GM10248 (cell line): ENCODE measurements at regions of chr1 and their contacts with region 1.

Region 1: GRCh38 chr1:27671964-27672749 is at the start of gene IFI6:
- DNase-seq: peak; percentile 89
- CTCF ChIP-seq: no peak

Region 2: GRCh38 chr1:27469334-27469733 is 202.8 kb before region 1 on chr1:
- CTCF ChIA-PET with region 1: no interaction called
- POLR2A ChIA-PET with region 1: no interaction called
- DNase-seq: no peak
- CTCF ChIP-seq: no peak

Region 3: DNA sequence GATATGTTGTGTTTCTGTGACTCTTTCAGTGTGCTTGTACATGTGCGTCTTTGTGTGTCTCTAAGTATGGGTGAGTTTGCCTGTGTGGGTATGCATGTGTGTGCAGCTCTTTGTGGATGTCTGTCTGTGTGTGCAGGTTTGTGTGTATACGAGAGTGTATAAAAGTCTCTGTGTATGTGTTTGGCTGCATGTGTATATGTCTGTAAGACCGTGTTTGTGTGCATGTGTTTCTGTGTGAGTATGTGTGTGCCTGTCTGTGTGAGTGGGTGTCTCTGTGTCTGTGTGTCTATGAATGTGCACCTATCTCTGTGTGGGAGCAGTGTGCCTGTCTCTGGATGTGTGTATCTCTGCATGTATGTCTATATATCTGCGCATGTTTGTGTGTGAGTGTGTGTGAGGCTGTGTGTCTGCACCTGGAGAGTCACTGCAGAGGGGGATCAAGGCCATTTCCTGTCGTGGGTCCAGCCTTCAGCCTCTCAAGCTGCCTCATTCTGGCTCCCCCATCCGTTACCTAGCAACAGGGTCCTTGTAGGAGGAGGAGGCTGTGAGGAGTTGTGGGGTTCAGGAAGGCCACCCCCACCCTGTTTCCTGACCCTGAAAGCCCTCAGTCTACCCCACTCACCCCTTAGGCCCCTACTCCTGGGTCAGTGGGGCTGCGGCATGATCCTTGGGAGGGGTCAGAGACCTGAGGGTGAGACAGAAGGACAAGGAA is 47.5 kb before region 1 on chr1:
- CTCF ChIA-PET with region 1: interaction called, 13 read pairs
- POLR2A ChIA-PET with region 1: no interaction called
- DNase-seq: peak; percentile 59
- CTCF ChIP-seq: no peak

Region 4: DNA sequence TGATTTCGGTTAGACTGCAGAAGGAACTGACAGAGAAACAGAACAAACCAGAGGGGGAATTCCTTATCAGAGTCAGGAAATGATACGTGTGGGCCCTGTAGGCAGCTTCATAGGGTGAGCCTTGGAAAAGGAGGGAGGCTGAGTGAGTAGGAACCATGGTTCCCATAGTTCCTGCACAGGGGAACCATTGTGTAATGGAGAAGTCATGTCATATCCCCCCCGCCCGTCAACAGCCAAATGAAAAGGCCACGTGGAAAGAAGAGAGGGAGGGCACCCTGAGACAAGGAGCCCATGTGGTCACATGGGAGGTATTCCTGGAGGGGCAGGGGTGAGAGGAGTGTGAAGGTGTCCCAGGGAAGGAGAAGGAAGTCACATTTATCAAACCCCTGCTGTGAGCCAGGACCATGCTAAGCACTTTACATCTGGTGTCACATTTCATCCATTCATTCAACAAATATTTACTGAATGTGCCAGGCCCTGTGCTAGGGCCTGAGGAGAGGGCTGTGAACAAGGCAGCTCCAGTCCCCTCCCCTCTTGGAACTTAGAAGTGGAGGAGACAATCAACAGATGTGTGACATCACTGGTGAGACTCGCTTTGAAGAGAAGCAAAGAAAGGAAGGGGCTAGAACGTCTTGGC is 21.5 kb before region 1 on chr1:
- CTCF ChIA-PET with region 1: interaction called, 11 read pairs
- POLR2A ChIA-PET with region 1: no interaction called
- DNase-seq: no peak
- CTCF ChIP-seq: no peak

Region 5: GRCh38 chr1:27689423-27690173 is 17.4 kb after region 1 on chr1:
- CTCF ChIA-PET with region 1: interaction called, 55 read pairs
- POLR2A ChIA-PET with region 1: no interaction called
- DNase-seq: peak; percentile 38
- CTCF ChIP-seq: no peak

Region 6: GRCh38 chr1:27719286-27720251 is 47.4 kb after region 1 on chr1:
- CTCF ChIA-PET with region 1: interaction called, 16 read pairs
- POLR2A ChIA-PET with region 1: no interaction called
- DNase-seq: no peak
- CTCF ChIP-seq: no peak